Naive thymus-derived CD4-positive, alpha-beta T cell (primary cell): ENCODE measurements at regions of chr12 and their contacts with region 1.

Region 1: GRCh38 chr12:55738123-55739024 is 4.5 kb upstream of the GDF11 start:
- DNase-seq: peak in 8 of 9 donors; percentile 69 to 88 (median 81)
- ATAC-seq: peak; percentile 79
- H3K4me3 ChIP-seq: peak overlapping the region; percentile 91
- H3K4me3 Mint-ChIP-seq: peak overlapping the region; percentile 74 to 94 (median 89)
- H3K27ac ChIP-seq: peak overlapping the region; percentile 76
- H3K27ac Mint-ChIP-seq: peak overlapping the region; percentile 86 to 96 (median 92)
- H3K4me1 ChIP-seq: peaks cover 15 to 18% of the 10 kb centered on the region in 2 donors
- H3K4me1 Mint-ChIP-seq: peaks cover 26 to 43% (median 29%) of the 10 kb centered on the region in 7 donors
- H3K27me3 ChIP-seq: no peaks in the 10 kb centered on the region
- H3K27me3 Mint-ChIP-seq: peaks cover 0 to 8% (median 0%) of the 10 kb centered on the region in 5 donors

Region 2: DNA sequence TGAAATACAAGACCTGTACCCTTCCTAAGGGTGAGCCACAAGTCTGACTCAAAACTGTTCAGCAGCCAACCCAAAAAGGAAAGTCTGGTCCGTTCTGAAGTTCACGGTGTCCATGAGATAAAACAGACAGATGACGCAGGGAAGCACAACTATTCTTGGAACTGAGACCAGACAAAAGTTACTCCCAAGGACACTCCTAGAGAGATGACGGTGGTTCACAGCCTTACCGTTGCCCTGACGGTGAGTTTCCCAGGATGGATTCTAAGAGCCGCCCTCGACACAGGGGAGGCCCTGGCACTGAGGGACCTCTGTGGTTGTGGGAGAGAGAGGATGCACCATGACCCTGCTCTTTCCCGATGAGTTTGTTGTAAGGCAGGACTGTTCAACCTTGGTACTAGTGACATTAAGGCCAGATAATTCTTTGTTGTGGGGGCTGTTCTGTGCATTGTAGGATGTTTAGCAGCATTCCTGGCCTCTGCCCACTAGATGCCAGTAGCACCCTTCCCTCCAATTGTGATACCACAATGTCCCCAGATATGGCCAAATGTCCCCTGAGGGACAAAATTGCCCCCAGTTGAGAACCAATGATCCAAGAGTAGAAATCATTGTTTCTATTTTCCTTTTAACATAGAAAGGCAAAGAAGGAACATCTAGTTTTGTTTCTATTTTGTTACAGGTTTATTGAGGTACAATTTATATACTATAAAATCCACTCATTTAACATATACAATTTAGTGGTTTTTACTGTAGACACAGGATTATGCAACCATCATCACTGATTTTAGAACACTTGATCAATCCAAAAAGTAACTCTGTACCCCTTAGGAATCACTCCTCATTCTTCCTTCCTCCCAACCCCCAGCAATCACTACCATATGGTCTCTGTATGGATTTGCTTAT is 78.6 kb before region 1 on chr12:
- CTCF ChIA-PET with region 1: no interaction called
- POLR2A ChIA-PET with region 1: no interaction called
- intact Hi-C with region 1: loop called in 1 of 2 experiments (anchors 1 kb)
- DNase-seq: no peak
- ATAC-seq: no peak
- H3K4me3 ChIP-seq: no peak overlapping the region
- H3K4me3 Mint-ChIP-seq: no peak overlapping the region
- H3K27ac ChIP-seq: no peak overlapping the region
- H3K27ac Mint-ChIP-seq: no peak overlapping the region
- H3K4me1 ChIP-seq: no peaks in the 10 kb centered on the region
- H3K4me1 Mint-ChIP-seq: peaks cover 0 to 4% (median 2%) of the 10 kb centered on the region in 7 donors
- H3K27me3 ChIP-seq: no peaks in the 10 kb centered on the region
- H3K27me3 Mint-ChIP-seq: peaks cover 0 to 35% (median 0%) of the 10 kb centered on the region in 5 donors

Region 3: GRCh38 chr12:55797068-55797467 is 58.7 kb after region 1 on chr12:
- CTCF ChIA-PET with region 1: interaction called, 25 read pairs
- POLR2A ChIA-PET with region 1: interaction called, 3 read pairs
- intact Hi-C with region 1: loop called (anchors 1 kb)
- DNase-seq: peak in 4 of 9 donors; percentile 19 to 30 (median 26)
- ATAC-seq: peak; percentile 44
- H3K4me3 ChIP-seq: no peak overlapping the region
- H3K4me3 Mint-ChIP-seq: no peak overlapping the region
- H3K27ac ChIP-seq: no peak overlapping the region
- H3K27ac Mint-ChIP-seq: peak overlapping the region in 1 of 9 donors; percentile 23
- H3K4me1 ChIP-seq: no peaks in the 10 kb centered on the region
- H3K4me1 Mint-ChIP-seq: peaks cover 0 to 20% (median 11%) of the 10 kb centered on the region in 7 donors
- H3K27me3 ChIP-seq: no peaks in the 10 kb centered on the region
- H3K27me3 Mint-ChIP-seq: no peaks in the 10 kb centered on the region

Region 4: GRCh38 chr12:55940065-55940732 is 201.8 kb after region 1 on chr12:
- CTCF ChIA-PET with region 1: interaction called, 17 read pairs
- POLR2A ChIA-PET with region 1: interaction called, 21 read pairs
- intact Hi-C with region 1: loop called (anchors 1 kb)
- DNase-seq: peak; percentile 62 to 88 (median 82)
- ATAC-seq: peak; percentile 98
- H3K4me3 ChIP-seq: no peak overlapping the region
- H3K4me3 Mint-ChIP-seq: peak overlapping the region; percentile 57 to 99 (median 72)
- H3K27ac ChIP-seq: peak overlapping the region; percentile 64
- H3K27ac Mint-ChIP-seq: peak overlapping the region; percentile 55 to 100 (median 97)
- H3K4me1 ChIP-seq: peaks cover 16 to 63% of the 10 kb centered on the region in 2 donors
- H3K4me1 Mint-ChIP-seq: peaks cover 65 to 98% (median 93%) of the 10 kb centered on the region in 7 donors
- H3K27me3 ChIP-seq: no peaks in the 10 kb centered on the region
- H3K27me3 Mint-ChIP-seq: no peaks in the 10 kb centered on the region

Region 5: DNA sequence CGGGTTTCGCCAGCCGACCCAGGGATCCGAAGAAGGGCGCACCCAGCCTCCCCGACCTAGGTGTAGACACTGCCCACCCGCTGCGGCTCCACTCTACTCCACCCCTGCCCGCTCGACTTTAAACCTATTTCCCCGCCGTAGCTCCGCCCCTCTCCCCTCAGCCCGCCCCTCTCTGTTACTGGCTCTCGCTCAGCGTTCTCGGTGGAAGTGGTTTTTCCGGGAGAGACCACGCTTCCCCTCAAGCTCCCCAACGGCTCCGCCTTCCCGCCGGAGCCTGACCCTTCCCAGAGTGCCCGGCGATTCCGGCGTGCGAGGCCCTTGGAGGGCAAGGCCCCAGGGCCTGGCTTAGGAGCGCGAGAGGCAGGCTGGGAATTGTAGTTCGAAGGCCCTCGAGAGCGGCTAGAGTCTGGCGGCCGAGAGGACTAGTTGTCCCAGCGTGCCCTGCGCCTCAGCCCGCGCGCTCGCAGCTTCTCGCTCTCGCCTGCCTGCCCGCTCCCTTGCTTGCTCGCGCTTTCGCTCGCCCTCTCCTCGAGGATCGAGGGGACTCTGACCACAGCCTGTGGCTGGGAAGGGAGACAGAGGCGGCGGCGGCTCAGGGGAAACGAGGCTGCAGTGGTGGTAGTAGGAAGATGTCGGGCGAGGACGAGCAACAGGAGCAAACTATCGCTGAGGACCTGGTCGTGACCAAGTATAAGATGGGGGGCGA is 365.9 kb after region 1 on chr12 and contains the start of gene PA2G4:
- CTCF ChIA-PET with region 1: interaction called, 4 read pairs
- POLR2A ChIA-PET with region 1: interaction called, 6 read pairs
- intact Hi-C with region 1: loop called (anchors 1 to 2 kb)
- DNase-seq: peak; percentile 83 to 97 (median 96)
- ATAC-seq: peak; percentile 93
- H3K4me3 ChIP-seq: peak within 1 kb of the TSS; percentile 87
- H3K4me3 Mint-ChIP-seq: peak within 1 kb of the TSS; percentile 91 to 100 (median 98)
- H3K27ac ChIP-seq: peak within 1 kb of the TSS; percentile 82
- H3K27ac Mint-ChIP-seq: peak within 1 kb of the TSS; percentile 92 to 99 (median 98)
- H3K4me1 ChIP-seq: peaks cover 36 to 37% of the 10 kb centered on the region in 2 donors
- H3K4me1 Mint-ChIP-seq: peaks cover 31 to 69% (median 64%) of the 10 kb centered on the region in 7 donors
- H3K27me3 ChIP-seq: no peaks in the 10 kb centered on the region
- H3K27me3 Mint-ChIP-seq: peaks cover 0 to under 1% (median 0%) of the 10 kb centered on the region in 5 donors
- total RNA-seq, gene PA2G4: 61.7 to 254 (median 109) TPM

Region 6: DNA sequence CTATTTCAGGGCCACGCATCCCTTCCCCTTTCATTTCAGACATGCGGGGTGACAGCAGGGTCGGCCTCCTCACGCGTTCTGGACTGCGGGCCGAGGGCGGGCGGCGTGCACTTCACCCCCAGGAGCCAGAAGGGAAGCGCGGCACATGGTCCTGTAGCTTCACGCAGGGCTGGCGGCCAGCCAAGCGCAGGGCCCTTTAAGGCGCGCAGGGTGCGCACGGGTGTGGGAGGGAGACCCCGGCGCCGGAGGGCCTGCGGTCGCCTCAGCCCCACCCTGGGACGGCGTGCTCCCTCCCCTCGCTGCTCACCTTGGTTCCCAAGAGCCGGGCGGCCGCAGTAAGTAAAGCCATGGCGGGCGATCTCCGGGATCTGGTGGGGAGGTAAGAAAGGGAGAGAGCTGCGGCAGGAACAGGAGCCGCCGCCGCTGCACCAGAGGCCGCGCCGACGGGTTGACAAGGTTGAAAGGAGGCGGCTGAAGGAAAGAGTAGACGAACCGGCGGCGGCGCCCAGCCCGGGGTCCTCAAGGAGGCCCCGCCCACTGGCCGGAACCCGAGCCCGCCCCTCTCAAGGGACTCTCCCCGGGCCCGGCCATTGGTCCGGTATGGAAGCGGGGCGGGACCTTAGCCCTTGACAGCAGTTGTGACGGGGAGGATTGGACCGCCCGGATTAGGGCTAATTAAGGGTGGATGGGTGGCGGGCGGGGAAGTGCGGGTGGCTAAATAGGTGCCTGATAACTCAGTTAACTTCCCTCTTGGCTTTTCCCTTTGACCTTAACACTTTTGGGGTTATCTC is 561.7 kb after region 1 on chr12 and contains the start of gene CS:
- CTCF ChIA-PET with region 1: interaction called, 3 read pairs
- POLR2A ChIA-PET with region 1: no interaction called
- intact Hi-C with region 1: loop called in 1 of 2 experiments (anchors 2 kb)
- DNase-seq: peak; percentile 95 to 99 (median 98)
- ATAC-seq: peak; percentile 98
- H3K4me3 ChIP-seq: peak within 1 kb of the TSS; percentile 73
- H3K4me3 Mint-ChIP-seq: peak within 1 kb of the TSS; percentile 93 to 100 (median 96)
- H3K27ac ChIP-seq: peak within 1 kb of the TSS; percentile 94
- H3K27ac Mint-ChIP-seq: peak within 1 kb of the TSS; percentile 93 to 99 (median 97)
- H3K4me1 ChIP-seq: peaks cover 26 to 48% of the 10 kb centered on the region in 2 donors
- H3K4me1 Mint-ChIP-seq: peaks cover 27 to 58% (median 53%) of the 10 kb centered on the region in 7 donors
- H3K27me3 ChIP-seq: no peaks in the 10 kb centered on the region
- H3K27me3 Mint-ChIP-seq: no peaks in the 10 kb centered on the region
- total RNA-seq, gene CS: 126 to 241 (median 167) TPM